Motor neuron (in vitro differentiated cells): ENCODE measurements at regions of chr3 and their contacts with region 1.

Region 1: GRCh38 chr3:112734718-112735350 is 93.9 kb upstream of the CCDC80 start:
- ATAC-seq: peak in 4 of 8 experiments; percentile 36 to 94 (median 71)
- H3K4me3 ChIP-seq: no peak overlapping the region
- H3K27ac ChIP-seq: no peak overlapping the region
- H3K4me1 ChIP-seq: peaks cover 0 to 6% of the 10 kb centered on the region in 2 donors

Region 2: DNA sequence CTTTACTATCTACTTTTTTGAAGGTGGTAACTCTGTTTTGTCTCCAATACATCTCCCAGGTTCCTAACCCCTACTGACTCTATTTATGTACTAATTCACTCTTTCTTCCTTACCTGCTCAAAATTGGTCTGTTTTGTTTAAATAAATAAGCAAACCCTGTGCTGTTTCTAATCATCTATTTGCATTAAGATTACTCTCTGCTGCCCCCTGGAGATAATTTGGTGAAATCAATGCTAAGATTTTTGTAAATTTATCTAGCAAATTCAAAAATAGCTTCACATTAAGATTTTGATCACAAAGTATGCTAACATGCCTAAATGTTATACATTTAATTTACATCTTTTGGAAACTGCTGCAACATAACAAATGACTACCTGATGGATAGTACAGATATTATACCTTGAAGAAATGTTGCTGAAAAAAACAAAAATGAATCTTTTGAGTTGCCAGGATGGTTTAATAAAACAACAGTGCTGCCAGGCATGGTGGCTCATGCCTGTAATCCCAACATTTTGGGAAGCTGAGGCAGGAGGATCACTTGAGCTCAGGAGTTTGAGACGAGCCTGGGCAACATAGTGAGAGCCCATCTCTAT is 244.5 kb after region 1 on chr3:
- in situ Hi-C with region 1: loop called in 3 of 9 experiments (anchors 10 to 25 kb)
- ATAC-seq: peak in 2 of 8 experiments; percentile 21 to 26
- H3K4me3 ChIP-seq: no peak overlapping the region
- H3K27ac ChIP-seq: no peak overlapping the region
- H3K4me1 ChIP-seq: no peaks in the 10 kb centered on the region

Region 3: DNA sequence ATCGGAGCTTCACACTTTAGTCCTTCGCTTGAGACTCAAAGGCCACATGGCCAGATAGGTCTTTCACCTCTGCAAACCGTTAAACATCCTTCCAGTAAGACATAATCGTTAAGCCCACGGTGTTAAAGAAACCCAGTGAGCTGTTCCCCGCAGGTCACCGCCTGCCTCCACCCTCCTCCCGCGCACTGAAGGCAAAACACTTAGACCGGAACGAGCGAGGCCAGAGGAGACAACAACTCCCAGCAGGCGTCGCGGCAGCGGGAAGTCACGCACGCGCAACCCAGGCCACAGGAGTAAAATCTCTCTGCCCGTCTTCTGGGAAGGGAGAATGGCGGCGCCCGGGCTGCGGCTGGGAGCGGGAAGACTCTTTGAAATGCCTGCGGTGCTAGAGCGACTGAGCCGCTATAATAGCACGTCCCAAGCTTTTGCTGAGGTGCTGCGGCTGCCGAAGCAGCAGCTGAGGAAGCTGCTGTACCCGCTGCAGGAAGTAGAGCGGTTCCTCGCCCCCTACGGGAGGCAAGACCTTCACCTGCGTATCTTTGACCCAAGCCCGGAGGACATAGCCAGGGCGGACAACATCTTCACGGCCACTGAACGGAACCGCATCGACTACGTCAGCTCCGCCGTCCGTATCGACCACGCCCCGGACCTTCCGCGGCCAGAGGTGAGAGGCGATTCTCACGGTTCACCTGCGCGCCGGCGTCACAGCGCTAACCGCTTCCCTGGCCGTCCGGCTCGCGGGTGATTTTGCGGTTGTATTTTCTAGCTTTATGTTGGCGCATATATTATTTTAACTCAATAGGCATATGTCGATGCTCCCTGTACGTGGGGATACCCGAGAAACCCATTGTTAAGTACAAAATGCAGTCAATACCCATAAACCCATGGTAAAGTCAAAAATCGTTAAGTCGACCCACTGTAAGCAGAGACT is 256.1 kb after region 1 on chr3 and contains the start of gene GTPBP8:
- in situ Hi-C with region 1: loop called in 2 of 9 experiments (anchors 25 kb)
- ATAC-seq: peak; percentile 95 to 98 (median 97)
- H3K4me3 ChIP-seq: peak within 1 kb of the TSS; percentile 80 to 97 (median 91)
- H3K27ac ChIP-seq: peak within 1 kb of the TSS; percentile 95 to 97
- H3K4me1 ChIP-seq: peaks cover 6 to 16% of the 10 kb centered on the region in 2 donors
- total RNA-seq, gene GTPBP8: 16.8 to 31.2 (median 23.9) TPM